Common myeloid progenitor, CD34-positive (primary cell): ENCODE measurements at regions of chr2 and their contacts with region 1.

Region 1: DNA sequence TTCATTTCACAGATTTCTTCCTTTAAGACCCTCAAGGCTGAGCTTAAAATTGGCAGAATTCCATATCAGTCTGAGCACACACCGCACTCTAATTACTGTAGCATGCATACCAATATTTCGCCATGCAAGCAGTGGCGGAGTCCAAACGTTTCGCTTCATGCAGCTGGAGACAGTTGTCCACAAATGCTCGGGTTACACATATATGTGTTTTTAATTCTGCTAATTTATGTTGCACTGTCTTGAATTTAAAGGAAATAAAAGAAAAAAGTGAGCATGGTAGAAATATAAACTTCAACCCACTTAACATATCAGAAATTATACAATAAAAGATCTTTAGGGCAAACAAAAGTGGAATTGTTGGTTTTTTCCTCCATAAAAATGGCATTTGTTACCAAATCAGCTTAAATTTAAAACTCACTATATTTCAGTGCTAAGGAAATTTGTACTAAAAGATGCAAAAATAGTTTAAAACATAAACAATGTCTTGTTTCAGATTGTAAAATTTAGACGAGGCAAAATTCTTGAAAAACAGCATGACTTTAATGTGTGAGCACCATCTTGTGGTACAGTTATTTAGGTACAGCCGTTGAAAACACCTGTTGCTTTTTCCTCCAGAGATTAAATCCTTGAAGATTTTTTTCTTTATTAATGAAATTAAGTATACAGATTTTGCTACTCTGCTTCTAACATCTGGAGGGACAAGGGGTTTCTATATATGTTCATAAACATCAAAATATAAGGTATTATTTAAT is 24.1 kb upstream of the KANSL1L start:
- DNase-seq: peak; percentile 61 to 73 (median 70)
- H3K4me3 ChIP-seq: peak overlapping the region in 2 of 7 experiments; percentile 5 to 68
- H3K27ac ChIP-seq: no peak overlapping the region
- H3K4me1 ChIP-seq: peaks cover 0 to 13% (median 5%) of the 10 kb centered on the region in 4 experiments
- H3K27me3 ChIP-seq: no peaks in the 10 kb centered on the region

Region 2: GRCh38 chr2:209970322-209971110 is 224.8 kb before region 1 on chr2:
- CTCF ChIA-PET with region 1: interaction called, 124 read pairs
- POLR2A ChIA-PET with region 1: no interaction called
- DNase-seq: no peak
- H3K4me3 ChIP-seq: no peak overlapping the region
- H3K27ac ChIP-seq: no peak overlapping the region
- H3K4me1 ChIP-seq: no peaks in the 10 kb centered on the region
- H3K27me3 ChIP-seq: peaks cover 0 to 5% (median 0%) of the 10 kb centered on the region in 5 experiments

Region 3: GRCh38 chr2:209977386-209978239 is 217.7 kb before region 1 on chr2:
- CTCF ChIA-PET with region 1: interaction called, 124 read pairs
- POLR2A ChIA-PET with region 1: interaction called, 3 read pairs
- DNase-seq: peak; percentile 56 to 74 (median 69)
- H3K4me3 ChIP-seq: no peak overlapping the region
- H3K27ac ChIP-seq: no peak overlapping the region
- H3K4me1 ChIP-seq: no peaks in the 10 kb centered on the region
- H3K27me3 ChIP-seq: peaks cover 0 to 2% (median 0%) of the 10 kb centered on the region in 5 experiments

Region 4: GRCh38 chr2:209988010-209988409 is 207.3 kb before region 1 on chr2:
- CTCF ChIA-PET with region 1: interaction called, 21 read pairs
- POLR2A ChIA-PET with region 1: no interaction called
- DNase-seq: peak; percentile 67 to 91 (median 81)
- H3K4me3 ChIP-seq: peak overlapping the region in 3 of 7 experiments; percentile 20 to 69 (median 33)
- H3K27ac ChIP-seq: no peak overlapping the region
- H3K4me1 ChIP-seq: peaks cover 8 to 31% (median 22%) of the 10 kb centered on the region in 4 experiments
- H3K27me3 ChIP-seq: no peaks in the 10 kb centered on the region

Region 5: DNA sequence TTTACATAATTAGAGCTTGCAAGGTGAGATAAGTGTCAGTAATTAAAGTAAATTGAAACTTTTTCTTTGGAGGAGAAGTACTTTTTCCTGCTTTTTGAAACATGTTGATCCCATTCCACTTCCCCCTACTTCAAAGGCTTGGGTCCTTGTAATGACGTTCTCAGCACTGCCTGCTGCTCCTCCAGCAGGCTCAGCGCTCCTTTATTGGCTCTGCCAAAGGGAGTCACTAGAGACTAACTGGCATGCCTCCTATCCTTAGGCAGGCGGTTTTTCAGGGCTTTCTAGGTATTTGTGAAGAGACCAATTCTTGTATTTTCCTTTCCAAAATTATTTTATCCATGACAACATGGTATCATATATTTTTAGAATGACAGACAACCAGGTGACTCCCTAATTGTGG is 73.9 kb after region 1 on chr2:
- CTCF ChIA-PET with region 1: no interaction called
- POLR2A ChIA-PET with region 1: no interaction called
- DNase-seq: no peak
- H3K4me3 ChIP-seq: no peak overlapping the region
- H3K27ac ChIP-seq: no peak overlapping the region
- H3K4me1 ChIP-seq: no peaks in the 10 kb centered on the region
- H3K27me3 ChIP-seq: peaks cover 0 to 10% (median 0%) of the 10 kb centered on the region in 5 experiments